ENCODE measurements at regions of chr1 and their contacts with region 1.

Region 1: DNA sequence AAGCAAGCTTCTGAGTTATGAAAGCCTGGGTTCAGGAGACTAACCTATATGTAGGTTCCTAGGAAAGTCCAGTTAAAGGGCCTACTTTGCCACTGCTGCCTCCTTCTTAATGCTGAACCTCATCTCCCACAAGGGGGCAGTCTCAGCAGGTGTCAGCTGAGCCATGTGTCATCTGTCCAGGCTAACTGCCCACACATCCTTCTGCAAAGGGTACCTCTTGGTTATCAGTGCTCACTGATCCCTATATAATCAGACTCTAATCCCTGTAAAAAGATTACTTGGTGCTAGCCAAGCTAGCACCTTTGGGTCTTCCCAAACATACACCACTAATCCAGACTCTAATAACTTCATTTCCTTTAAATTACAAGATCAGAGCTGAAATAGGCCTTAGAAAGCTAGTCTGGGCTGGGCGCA is 9.0 kb downstream of the PRDX1 start:
- DNase-seq: peak; percentile 74
- H3K4me3 Mint-ChIP-seq: no peak overlapping the region
- H3K27ac Mint-ChIP-seq: no peak overlapping the region
- H3K4me1 Mint-ChIP-seq: peaks cover 15% of the 10 kb centered on the region
- H3K27me3 Mint-ChIP-seq: no peaks in the 10 kb centered on the region

Region 2: GRCh38 chr1:45444609-45445171 is 68.0 kb before region 1 on chr1:
- CTCF ChIA-PET with region 1: no interaction called
- POLR2A ChIA-PET with region 1: no interaction called
- DNase-seq: no peak
- H3K4me3 Mint-ChIP-seq: no peak overlapping the region
- H3K27ac Mint-ChIP-seq: no peak overlapping the region
- H3K4me1 Mint-ChIP-seq: no peaks in the 10 kb centered on the region
- H3K27me3 Mint-ChIP-seq: no peaks in the 10 kb centered on the region

Region 3: DNA sequence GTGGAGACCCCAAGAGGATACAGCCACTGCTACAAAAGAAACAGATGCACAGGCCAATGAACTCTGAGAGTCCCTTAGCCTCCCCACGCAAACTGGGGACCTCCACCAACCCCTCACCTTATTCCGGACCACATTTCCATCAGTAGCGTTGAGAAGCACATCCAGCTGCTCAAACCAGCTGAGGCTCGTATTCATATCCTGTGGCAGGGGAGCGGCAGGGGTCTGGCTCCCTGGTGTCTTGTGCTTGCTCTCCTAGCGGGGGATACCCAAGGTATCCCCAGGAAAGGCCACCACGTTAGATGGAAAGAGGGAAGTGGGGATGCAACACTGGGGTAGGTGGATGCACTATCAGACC is 13.3 kb before region 1 on chr1:
- CTCF ChIA-PET with region 1: interaction called, 20 read pairs
- POLR2A ChIA-PET with region 1: interaction called, 3 read pairs
- DNase-seq: peak; percentile 26
- H3K4me3 Mint-ChIP-seq: peak overlapping the region; percentile 85
- H3K27ac Mint-ChIP-seq: peak overlapping the region; percentile 88
- H3K4me1 Mint-ChIP-seq: peaks cover 31% of the 10 kb centered on the region
- H3K27me3 Mint-ChIP-seq: no peaks in the 10 kb centered on the region

Measured in activated CD4-positive, alpha-beta T cell treated with anti-CD3 and anti-CD28 coated beads, Interleukin-2, amount 10 ng/mL, durations not matched to agents 7 days and 5 days (primary cell).